ENCODE measurements at regions of chr1 and their contacts with region 1.

Region 1: GRCh38 chr1:227734856-227735538 is at the starts of genes JMJD4 and SNAP47:
- DNase-seq: peak; percentile 97
- H3K4me3 Mint-ChIP-seq: peak within 1 kb of the TSS; percentile 83
- H3K27ac Mint-ChIP-seq: peak within 1 kb of the TSS; percentile 78
- H3K4me1 Mint-ChIP-seq: peaks cover 8% of the 10 kb centered on the region
- H3K27me3 Mint-ChIP-seq: no peaks in the 10 kb centered on the region
- CTCF ChIP-seq: no peak
- total RNA-seq, gene JMJD4: 37.8 and 40.0 TPM in 2 replicates
- total RNA-seq, gene SNAP47: 39.4 and 39.9 TPM in 2 replicates

Region 2: DNA sequence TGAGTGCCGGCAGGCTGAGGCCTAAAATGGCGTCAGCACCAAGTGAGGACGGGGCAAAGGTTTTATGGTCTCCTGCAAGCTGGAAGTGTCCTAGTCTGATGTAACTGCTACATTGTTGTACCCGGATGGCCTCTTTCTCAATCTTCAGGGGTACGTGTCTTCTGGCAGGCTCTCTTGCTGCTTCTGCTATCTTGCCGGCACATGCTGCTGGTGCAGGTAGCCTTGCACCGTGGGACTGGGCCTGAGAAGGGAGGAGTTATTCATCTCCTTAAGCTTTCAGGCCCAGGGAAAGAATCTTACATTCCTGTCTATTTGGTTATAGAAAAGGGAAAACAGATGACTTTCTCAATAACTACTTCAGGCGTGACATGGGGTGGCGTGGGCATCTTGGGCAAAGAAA is 99.4 kb before region 1 on chr1:
- CTCF ChIA-PET with region 1: no interaction called
- intact Hi-C with region 1: no loop called
- DNase-seq: no peak
- H3K4me3 Mint-ChIP-seq: no peak overlapping the region
- H3K27ac Mint-ChIP-seq: no peak overlapping the region
- H3K4me1 Mint-ChIP-seq: no peaks in the 10 kb centered on the region
- H3K27me3 Mint-ChIP-seq: no peaks in the 10 kb centered on the region
- CTCF ChIP-seq: no peak

Region 3: DNA sequence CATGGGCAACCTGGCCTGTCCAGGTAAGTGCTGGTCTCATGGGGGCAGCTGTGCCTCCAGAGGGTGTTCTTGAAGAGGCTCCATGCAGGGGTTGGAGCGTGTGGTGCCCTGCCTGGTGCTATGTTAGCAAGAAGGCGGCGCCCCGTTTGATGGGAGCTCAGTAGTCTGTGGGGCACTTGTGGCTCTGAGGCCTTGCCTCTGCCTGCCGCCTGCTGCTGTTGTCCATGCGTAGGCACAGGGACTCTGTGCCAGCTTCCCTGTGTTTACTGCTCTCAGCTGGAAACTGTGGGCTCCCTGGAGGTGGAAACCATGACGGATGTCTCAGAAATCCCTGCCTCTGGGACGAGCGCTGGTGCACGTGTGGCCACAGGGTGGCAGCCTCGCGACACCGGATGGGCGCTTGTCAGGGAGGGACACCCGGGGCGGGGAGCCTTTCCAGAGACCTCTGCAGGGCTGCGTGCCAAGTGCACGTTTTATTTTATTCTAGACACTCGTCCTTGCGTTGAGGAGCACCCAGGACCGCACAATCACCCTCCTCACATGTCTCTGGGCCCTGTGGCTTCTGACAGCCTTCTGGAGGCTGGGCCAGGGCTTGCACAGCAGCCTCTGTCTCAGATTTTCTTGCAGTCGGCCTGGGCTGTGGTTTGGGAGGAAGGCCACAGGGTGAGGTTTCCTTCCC is 27.4 kb after region 1 on chr1:
- CTCF ChIA-PET with region 1: interaction called, 13 read pairs
- intact Hi-C with region 1: no loop called
- DNase-seq: peak; percentile 89
- H3K4me3 Mint-ChIP-seq: no peak overlapping the region
- H3K27ac Mint-ChIP-seq: no peak overlapping the region
- H3K4me1 Mint-ChIP-seq: peaks cover 11% of the 10 kb centered on the region
- H3K27me3 Mint-ChIP-seq: no peaks in the 10 kb centered on the region
- CTCF ChIP-seq: peak; percentile 80

Region 4: DNA sequence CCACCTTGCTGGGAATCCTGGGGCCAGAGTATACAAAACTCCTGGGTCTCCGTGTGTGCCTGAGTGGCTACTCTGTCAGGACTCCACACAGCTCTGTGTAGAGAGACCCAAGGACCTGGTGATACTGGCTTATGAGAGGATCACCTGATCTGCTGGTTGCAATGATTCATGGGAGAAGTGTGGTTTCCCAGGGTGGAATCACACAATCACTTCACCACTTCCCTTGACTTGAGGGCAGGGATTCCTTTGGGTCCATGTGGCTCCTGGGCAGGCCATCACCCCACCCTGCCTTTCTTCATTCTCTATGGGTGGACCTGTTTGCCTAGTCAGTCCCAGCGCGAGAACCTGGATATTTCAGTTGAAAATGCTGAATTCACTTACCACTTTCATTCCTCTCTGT is 93.8 kb after region 1 on chr1:
- CTCF ChIA-PET with region 1: no interaction called
- intact Hi-C with region 1: no loop called
- DNase-seq: no peak
- H3K4me3 Mint-ChIP-seq: no peak overlapping the region
- H3K27ac Mint-ChIP-seq: no peak overlapping the region
- H3K4me1 Mint-ChIP-seq: no peaks in the 10 kb centered on the region
- H3K27me3 Mint-ChIP-seq: no peaks in the 10 kb centered on the region
- CTCF ChIP-seq: no peak